ENCODE measurements at regions of chr9 and their contacts with region 1.

Region 1: GRCh38 chr9:109945573-109945972 is 165.6 kb downstream of the PALM2AKAP2 start:
- DNase-seq: no peak
- H3K27ac ChIP-seq: no peak overlapping the region
- CTCF ChIP-seq: no peak

Region 2: GRCh38 chr9:109499631-109500410 is 445.8 kb before region 1 on chr9:
- CTCF ChIA-PET with region 1: no interaction called
- POLR2A ChIA-PET with region 1: no interaction called
- DNase-seq: no peak
- H3K27ac ChIP-seq: no peak overlapping the region
- CTCF ChIP-seq: no peak

Region 3: GRCh38 chr9:109971226-109971625 is 25.7 kb after region 1 on chr9:
- CTCF ChIA-PET with region 1: no interaction called
- POLR2A ChIA-PET with region 1: interaction called, 11 read pairs
- DNase-seq: no peak
- H3K27ac ChIP-seq: no peak overlapping the region
- CTCF ChIP-seq: no peak

Region 4: GRCh38 chr9:110047232-110047954 is 101.8 kb after region 1 on chr9:
- CTCF ChIA-PET with region 1: no interaction called
- POLR2A ChIA-PET with region 1: no interaction called
- DNase-seq: no peak
- H3K27ac ChIP-seq: peak overlapping the region; percentile 82; the same call in 1 of the 2 replicates
- CTCF ChIP-seq: no peak

Measured in RWPE1 (cell line).